ENCODE measurements at regions of chr1 and their contacts with region 1.

Region 1: DNA sequence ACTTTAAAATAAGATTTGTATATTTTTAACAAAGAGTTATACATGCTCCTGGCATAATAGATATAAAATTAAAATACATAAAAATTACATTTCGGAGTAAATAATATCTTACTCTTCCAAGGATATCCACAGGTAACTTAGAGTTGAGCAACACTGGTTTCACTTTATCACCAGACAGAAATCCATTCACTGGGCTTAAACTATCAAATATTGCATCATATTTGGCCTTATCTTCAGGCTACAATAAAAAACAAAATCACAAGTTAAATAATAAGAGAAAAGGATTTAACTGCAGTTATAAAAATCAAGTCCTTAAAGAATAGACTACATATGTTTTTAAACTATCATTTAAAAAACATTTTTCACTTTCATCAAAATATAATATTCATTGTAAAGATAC is 55.5 kb downstream of the EPS15 start:
- DNase-seq: no peak
- ATAC-seq: no peak

Region 2: DNA sequence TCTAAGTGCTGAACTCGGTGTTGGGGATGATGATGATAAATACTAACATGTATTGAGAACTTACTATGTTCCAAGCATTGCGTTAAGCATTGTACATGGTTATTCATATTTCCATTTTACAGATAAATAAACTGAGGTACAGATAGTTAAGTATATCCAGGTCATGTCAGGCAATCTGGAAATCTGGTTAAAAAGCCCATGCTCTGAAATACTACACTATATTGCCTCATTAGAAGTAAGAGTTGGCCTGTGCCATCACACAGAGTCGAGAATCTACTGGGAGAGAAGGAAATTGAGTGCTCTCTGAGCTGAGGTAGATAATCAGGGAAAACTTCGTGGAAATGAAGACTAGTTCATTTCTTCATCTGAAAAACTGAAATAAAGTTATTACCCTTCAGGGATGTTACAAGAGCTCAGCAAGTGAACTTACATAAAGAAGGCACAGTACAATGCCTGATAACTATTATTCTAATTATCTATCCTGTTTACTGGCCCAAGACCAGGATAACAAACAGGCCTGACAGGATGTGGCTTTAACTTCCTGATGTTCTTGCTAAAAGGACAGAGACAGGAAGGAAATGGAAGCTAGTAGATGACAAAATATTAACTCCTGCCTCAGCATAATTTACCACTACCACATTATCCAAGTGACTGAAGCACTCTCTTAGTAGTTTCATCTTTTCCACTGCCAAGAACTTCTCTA is 30.1 kb before region 1 on chr1:
- intact Hi-C with region 1: no loop called
- DNase-seq: no peak
- ATAC-seq: peak; percentile 71 to 74

Region 3: GRCh38 chr1:51519048-51519864 is 55.7 kb after region 1 on chr1 and contains the start of gene EPS15:
- intact Hi-C with region 1: loop called in 1 of 2 experiments (anchors 10 kb)
- DNase-seq: peak; percentile 88
- ATAC-seq: peak; percentile 84 to 90
- total RNA-seq, gene EPS15: 59.5 to 64.8 TPM

Region 4: GRCh38 chr1:51535006-51535592 is 71.5 kb after region 1 on chr1:
- intact Hi-C with region 1: loop called in 1 of 2 experiments (anchors 10 kb)
- DNase-seq: peak; percentile 26
- ATAC-seq: peak; percentile 57 to 64

Region 5: GRCh38 chr1:51549016-51549619 is 85.6 kb after region 1 on chr1:
- intact Hi-C with region 1: no loop called
- DNase-seq: no peak
- ATAC-seq: peak; percentile 57 to 75

Region 6: DNA sequence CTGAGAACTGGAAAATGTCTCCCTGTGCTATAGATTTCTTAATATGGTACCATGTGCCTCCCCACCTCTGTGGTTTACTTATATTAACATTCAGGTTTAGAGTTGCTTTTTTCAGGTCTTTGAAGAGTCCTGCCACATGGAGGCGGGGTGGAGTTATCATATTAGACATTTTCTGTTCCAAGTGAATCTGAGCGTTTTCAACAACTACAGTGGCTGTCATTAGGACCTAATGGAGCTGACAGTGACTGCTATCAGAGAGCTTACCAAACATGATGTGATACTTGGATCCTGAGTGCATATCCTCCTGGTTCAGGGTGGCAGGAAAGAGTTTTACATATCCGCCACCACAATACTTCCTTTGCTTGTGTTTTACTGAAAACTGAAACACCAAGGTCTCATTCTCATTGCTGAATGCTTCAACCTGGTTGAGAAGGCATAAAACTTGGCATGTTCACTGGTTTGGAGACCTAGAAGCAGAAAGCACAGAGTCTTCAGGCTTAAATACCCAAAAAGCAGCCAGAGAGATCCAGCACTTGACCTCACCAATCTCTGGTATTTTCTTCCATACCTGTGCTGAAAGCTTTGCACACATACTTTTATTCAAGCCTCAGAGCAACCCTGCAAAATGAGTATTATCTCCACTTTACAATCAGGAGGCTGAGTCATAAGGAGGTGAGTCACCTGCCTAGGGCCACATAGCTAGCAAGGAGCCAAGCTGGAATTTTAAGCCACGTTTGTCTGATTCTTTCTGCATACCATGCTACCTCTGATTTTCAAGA is 105.9 kb after region 1 on chr1:
- intact Hi-C with region 1: no loop called
- DNase-seq: no peak
- ATAC-seq: peak; percentile 48 to 65